Activated CD4-positive, alpha-beta memory T cell treated with anti-CD3 and anti-CD28 coated beads for 36 hours (primary cell): ENCODE measurements at regions of chr19 and their contacts with region 1.

Region 1: DNA sequence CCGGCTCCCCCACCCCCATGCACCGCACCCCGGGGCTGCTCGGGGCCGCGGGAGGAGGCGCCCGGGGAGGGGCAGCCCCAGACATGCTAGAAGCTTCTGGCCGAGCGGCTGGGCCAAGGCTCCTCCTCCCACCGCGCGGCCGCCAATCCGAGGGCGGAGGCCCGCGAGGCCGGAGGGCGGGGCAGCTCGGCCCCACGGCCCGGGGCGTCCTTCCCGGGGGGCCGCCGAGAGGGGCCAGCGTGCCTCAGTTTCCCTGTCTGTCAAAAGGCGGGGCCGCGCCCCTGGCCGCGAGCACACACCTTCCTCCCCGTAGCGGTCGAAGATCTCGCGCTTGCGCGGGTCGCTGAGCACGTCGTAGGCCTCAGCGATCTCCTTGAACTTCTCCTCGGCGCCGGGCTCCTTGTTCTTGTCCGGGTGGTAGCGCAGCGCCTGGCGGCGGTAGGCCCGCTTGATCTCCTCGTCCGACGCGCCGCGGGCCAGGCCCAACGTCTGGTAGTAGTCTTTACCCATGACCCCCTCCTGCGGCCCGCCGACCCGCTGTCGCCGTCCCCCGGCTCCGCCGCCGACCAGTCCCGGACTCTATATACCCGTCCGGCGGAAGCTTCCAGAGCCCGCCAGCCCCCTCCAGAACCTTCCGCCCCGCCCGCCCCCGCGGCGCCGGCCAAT is at the start of gene DNAJB1:
- DNase-seq: peak; percentile 79
- H3K4me3 Mint-ChIP-seq: peak within 1 kb of the TSS; percentile 88
- H3K27ac Mint-ChIP-seq: peak within 1 kb of the TSS; percentile 97
- H3K4me1 Mint-ChIP-seq: peaks cover 60% of the 10 kb centered on the region
- H3K27me3 Mint-ChIP-seq: no peaks in the 10 kb centered on the region
- total RNA-seq, gene DNAJB1: 71.2 to 76.5 TPM

Region 2: DNA sequence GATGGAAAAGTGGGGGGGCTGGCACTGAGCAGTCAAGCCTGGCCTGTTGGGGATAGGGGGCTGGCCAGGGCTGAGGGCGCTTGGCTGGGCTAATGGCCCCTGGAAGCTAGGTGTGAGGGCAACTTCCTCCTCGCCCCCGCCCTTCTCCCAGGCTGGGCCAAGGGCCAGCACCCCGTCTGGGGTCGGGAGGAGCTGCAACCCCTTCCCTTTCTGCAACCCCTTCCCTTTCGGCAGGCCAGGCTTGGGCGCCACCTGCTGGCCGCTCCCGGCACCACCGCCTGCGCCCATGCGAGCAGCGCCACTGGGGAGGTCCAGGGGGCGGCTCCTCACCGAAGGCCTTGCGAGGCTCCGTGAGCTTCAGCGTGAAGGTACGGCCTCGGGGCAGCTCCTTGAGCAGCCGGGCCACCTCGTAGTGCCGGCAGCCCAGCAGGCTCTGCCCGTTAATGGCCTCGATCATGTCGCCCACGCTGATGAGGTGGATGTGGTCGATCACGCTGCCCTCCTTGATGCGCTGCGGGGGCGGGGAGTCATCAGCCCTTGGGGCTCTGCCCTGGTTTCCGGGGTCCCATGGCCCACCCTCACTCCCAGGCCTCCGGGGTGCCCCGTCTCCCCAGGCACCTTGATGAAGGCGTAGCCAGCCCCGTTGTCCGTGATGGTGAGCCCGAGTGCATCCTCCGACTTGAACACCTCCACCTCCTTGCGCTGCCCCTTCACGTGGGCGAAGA is 37.8 kb before region 1 on chr19:
- CTCF ChIA-PET with region 1: interaction called, 11 read pairs
- POLR2A ChIA-PET with region 1: no interaction called
- intact Hi-C with region 1: no loop called
- DNase-seq: peak; percentile 83
- H3K4me3 Mint-ChIP-seq: no peak overlapping the region
- H3K27ac Mint-ChIP-seq: no peak overlapping the region
- H3K4me1 Mint-ChIP-seq: peaks cover 18% of the 10 kb centered on the region
- H3K27me3 Mint-ChIP-seq: peaks cover 2% of the 10 kb centered on the region

Region 3: GRCh38 chr19:14496028-14496833 is 21.7 kb before region 1 on chr19 and contains the start of gene GIPC1:
- CTCF ChIA-PET with region 1: no interaction called
- POLR2A ChIA-PET with region 1: interaction called, 18 read pairs
- intact Hi-C with region 1: no loop called
- DNase-seq: peak; percentile 89
- H3K4me3 Mint-ChIP-seq: peak within 1 kb of the TSS; percentile 78
- H3K27ac Mint-ChIP-seq: peak within 1 kb of the TSS; percentile 66
- H3K4me1 Mint-ChIP-seq: peaks cover 17% of the 10 kb centered on the region
- H3K27me3 Mint-ChIP-seq: no peaks in the 10 kb centered on the region
- total RNA-seq, gene GIPC1: 31.5 to 35.2 TPM

Region 4: DNA sequence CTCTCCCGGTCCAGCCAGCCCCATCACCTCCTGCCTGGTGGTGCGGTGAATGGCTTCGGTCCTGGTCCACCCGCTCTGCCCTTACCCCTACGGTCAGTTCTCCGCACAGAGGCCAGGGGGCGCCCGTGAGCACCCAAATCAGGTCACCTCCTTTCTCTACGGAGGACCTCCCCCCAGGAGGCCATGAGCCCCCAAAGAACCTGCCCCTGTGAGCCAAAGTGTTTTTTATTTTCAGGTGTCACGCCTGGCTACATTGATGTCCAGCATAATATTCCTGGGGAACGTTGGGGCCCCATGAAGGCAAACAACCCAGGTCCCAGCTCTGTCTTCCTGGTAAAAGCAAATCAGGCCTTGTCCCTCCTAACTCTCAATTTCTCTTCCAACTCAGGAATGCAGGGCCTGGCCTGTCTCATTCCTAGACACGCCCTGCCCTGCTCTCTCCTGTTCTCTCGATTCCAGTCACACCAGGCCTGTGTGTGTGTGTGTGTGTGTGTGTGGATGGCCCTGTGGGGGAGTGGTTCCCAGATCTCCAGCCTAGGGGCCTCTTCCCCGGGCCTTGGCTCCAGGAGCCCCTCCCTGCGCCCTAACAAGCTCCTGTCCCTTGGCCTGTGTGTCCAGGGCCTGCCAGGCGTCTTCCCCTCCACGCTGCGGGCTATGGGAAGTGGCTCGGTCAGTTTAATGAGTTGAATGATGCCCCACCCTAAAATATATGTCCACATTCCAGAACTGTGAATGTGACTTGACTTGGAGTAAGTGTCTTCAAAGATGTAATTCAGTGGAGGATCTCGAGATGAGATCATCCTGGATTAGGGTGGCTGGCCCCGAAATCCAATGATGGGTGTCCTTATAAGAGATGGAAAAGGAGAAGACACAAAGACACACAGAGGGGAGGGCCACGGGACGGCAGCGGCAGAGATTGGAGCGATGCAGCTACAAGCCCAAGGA is 12.2 kb before region 1 on chr19:
- CTCF ChIA-PET with region 1: interaction called, 21 read pairs
- POLR2A ChIA-PET with region 1: interaction called, 17 read pairs
- intact Hi-C with region 1: loop called (anchors 1 kb)
- DNase-seq: peak; percentile 85
- H3K4me3 Mint-ChIP-seq: no peak overlapping the region
- H3K27ac Mint-ChIP-seq: peak overlapping the region; percentile 74
- H3K4me1 Mint-ChIP-seq: peaks cover 40% of the 10 kb centered on the region
- H3K27me3 Mint-ChIP-seq: no peaks in the 10 kb centered on the region

Region 5: GRCh38 chr19:14529254-14530004 is 11.5 kb after region 1 on chr19 and contains the start of gene TECR:
- CTCF ChIA-PET with region 1: no interaction called
- POLR2A ChIA-PET with region 1: interaction called, 7 read pairs
- intact Hi-C with region 1: loop called (anchors 1 kb)
- DNase-seq: peak; percentile 100
- H3K4me3 Mint-ChIP-seq: peak within 1 kb of the TSS; percentile 98
- H3K27ac Mint-ChIP-seq: peak within 1 kb of the TSS; percentile 95
- H3K4me1 Mint-ChIP-seq: peaks cover 33% of the 10 kb centered on the region
- H3K27me3 Mint-ChIP-seq: no peaks in the 10 kb centered on the region
- total RNA-seq, gene TECR: 120 TPM

Region 6: DNA sequence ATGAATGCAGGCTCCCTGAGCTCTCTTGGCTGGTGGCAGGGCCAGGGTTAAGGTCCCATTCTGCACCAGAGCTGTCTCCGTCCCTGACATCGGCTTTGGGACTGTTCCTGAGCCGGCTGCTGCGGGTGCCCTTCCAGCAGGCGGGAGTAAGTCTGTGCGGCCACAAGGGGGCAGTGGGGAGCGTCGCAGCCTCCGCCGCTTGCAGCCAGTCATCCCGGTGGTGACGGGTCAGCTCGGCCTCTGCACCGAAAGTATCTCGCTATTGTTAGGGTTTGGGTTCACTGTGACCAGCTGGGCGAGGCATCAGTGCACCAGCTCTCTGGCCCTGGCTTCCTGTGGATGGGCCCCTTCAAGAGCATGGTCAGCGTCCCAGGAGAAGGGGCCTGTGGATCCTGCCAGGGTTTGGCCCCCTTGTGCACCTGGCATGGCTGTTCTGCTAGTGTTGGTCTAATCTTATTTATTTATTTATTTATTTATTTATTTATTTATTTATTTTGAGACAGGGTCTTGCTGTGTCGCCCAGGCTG is 38.8 kb after region 1 on chr19:
- CTCF ChIA-PET with region 1: interaction called, 11 read pairs
- POLR2A ChIA-PET with region 1: no interaction called
- intact Hi-C with region 1: no loop called
- DNase-seq: peak; percentile 85
- H3K4me3 Mint-ChIP-seq: no peak overlapping the region
- H3K27ac Mint-ChIP-seq: no peak overlapping the region
- H3K4me1 Mint-ChIP-seq: peaks cover 44% of the 10 kb centered on the region
- H3K27me3 Mint-ChIP-seq: no peaks in the 10 kb centered on the region

Region 7: DNA sequence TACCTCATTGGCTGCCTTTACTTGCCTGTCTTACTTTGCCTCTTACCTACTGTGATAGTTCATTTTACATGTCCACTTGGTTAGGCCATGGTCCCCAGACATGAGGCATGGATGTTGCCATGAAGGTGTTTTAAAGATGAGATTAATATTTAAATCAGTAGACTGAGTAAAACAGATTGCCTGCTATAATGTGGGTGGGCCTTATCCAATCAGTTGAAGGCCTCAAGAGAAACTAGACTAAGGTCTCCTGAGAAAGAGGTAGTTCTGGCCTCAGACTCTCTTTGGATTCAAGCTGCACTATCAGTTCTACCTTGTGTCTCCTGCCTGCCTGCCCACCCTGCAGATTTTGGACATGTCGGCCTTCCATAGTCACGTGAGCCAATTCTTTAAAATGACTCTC is 130.5 kb after region 1 on chr19:
- CTCF ChIA-PET with region 1: no interaction called
- POLR2A ChIA-PET with region 1: no interaction called
- intact Hi-C with region 1: loop called (anchors 5 kb)
- DNase-seq: no peak
- H3K4me3 Mint-ChIP-seq: no peak overlapping the region
- H3K27ac Mint-ChIP-seq: no peak overlapping the region
- H3K4me1 Mint-ChIP-seq: no peaks in the 10 kb centered on the region
- H3K27me3 Mint-ChIP-seq: peaks cover 9% of the 10 kb centered on the region